Activated CD4-positive, alpha-beta T cell treated with anti-CD3 and anti-CD28 coated beads for 36 hours (primary cell): ENCODE measurements at regions of chr11 and their contacts with region 1.

Region 1: GRCh38 chr11:67265633-67266423 is 445 bp upstream of the GRK2 start:
- DNase-seq: peak; percentile 87
- ATAC-seq: peak; percentile 18
- H3K4me3 Mint-ChIP-seq: peak overlapping the region; percentile 72
- H3K27ac Mint-ChIP-seq: peak overlapping the region; percentile 90
- H3K4me1 Mint-ChIP-seq: peaks cover 78% of the 10 kb centered on the region
- H3K27me3 Mint-ChIP-seq: no peaks in the 10 kb centered on the region

Region 2: DNA sequence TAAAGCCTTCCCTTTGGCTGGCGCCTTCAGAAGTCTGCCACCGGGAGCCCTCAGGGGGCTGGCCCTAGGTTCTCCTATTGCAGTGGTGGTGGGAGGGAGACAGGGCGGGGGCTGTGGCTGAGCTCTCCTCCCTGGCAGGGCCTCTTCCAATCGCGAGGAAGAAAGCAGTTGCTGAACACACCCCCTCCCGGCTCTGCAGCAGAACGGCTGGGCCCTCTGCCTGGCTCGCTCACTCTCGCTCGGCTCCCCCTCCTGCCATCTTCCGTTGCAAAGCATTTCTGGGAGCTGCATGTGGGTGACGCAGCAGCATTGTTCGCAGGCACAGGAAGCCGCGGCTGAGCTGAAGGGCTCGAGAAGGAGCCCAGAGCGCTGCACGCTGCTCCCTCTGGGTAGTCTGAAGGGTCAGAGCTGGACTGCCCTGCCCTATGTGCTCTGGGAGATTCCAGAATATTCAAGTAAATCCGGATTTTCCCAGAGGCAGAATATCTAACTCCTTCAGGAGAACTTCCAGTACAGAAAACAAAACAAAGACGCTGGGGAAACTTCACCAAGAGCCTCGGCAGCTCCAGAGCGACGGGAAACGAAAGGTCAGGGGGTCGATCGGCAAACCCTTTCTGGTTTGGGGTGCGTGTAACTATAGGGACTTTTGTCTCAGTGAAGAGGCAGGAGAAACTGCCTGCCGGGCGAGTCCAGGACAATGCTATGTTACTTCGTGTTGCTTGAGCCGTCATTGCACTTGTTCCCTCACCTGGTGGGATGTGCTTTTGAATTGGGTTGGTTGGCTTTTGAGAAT is 25.8 kb before region 1 on chr11:
- CTCF ChIA-PET with region 1: interaction called, 9 read pairs
- POLR2A ChIA-PET with region 1: interaction called, 8 read pairs
- intact Hi-C with region 1: loop called (anchors 1 to 2 kb)
- DNase-seq: peak; percentile 98
- ATAC-seq: peak; percentile 94
- H3K4me3 Mint-ChIP-seq: peak overlapping the region; percentile 98
- H3K27ac Mint-ChIP-seq: peak overlapping the region; percentile 99
- H3K4me1 Mint-ChIP-seq: peaks cover 43% of the 10 kb centered on the region
- H3K27me3 Mint-ChIP-seq: no peaks in the 10 kb centered on the region

Region 3: GRCh38 chr11:67252831-67253239 is 13.0 kb before region 1 on chr11:
- CTCF ChIA-PET with region 1: interaction called, 38 read pairs
- POLR2A ChIA-PET with region 1: no interaction called
- intact Hi-C with region 1: no loop called
- DNase-seq: peak; percentile 55
- ATAC-seq: peak; percentile 75
- H3K4me3 Mint-ChIP-seq: no peak overlapping the region
- H3K27ac Mint-ChIP-seq: peak overlapping the region; percentile 47
- H3K4me1 Mint-ChIP-seq: peaks cover 16% of the 10 kb centered on the region
- H3K27me3 Mint-ChIP-seq: no peaks in the 10 kb centered on the region

Region 4: DNA sequence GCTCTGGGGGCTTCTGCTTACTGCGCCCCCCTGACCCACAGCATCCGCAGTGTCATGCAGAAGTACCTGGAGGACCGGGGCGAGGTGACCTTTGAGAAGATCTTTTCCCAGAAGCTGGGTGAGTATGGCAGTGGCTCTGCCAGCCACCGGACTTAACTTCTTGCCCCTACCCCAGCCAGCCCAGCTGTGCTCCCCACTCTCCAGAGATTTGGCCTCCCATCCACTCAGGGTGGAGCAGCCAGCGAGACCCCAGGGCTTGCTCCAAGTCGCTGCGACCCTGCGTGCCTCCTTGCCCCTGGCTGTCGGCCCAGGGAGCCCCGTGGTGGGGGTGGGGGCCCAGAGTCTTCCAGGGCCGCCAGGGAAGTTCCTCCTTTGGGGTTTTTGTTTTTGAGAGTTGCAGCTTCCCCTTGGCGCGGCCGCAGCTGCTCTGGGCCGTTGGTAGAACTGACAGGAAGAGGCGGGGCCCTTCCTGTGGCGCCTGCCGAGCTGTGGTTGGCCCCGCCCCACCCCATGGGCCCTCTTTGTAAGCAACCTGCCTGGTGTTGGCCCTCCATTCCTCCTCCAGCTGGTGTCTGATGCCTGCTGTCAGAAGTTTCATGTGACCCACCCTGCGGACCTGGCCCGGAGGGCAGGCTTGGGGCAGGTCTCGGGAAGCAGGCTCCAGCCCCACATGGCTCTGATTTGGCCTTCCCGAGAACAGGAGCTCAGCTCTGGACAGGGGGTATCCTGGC is 11.6 kb after region 1 on chr11:
- CTCF ChIA-PET with region 1: interaction called, 15 read pairs
- POLR2A ChIA-PET with region 1: interaction called, 6 read pairs
- intact Hi-C with region 1: loop called (anchors 1 kb)
- DNase-seq: peak; percentile 95
- ATAC-seq: peak; percentile 88
- H3K4me3 Mint-ChIP-seq: peak overlapping the region; percentile 76
- H3K27ac Mint-ChIP-seq: peak overlapping the region; percentile 99
- H3K4me1 Mint-ChIP-seq: peaks cover 68% of the 10 kb centered on the region
- H3K27me3 Mint-ChIP-seq: no peaks in the 10 kb centered on the region

Region 5: GRCh38 chr11:67345920-67346799 is 80.3 kb after region 1 on chr11:
- CTCF ChIA-PET with region 1: interaction called, 12 read pairs
- POLR2A ChIA-PET with region 1: no interaction called
- intact Hi-C with region 1: no loop called
- DNase-seq: peak; percentile 45
- ATAC-seq: peak; percentile 77
- H3K4me3 Mint-ChIP-seq: no peak overlapping the region
- H3K27ac Mint-ChIP-seq: peak overlapping the region; percentile 89
- H3K4me1 Mint-ChIP-seq: peaks cover 55% of the 10 kb centered on the region
- H3K27me3 Mint-ChIP-seq: no peaks in the 10 kb centered on the region

Region 6: GRCh38 chr11:67382276-67383136 is 116.7 kb after region 1 on chr11:
- CTCF ChIA-PET with region 1: interaction called, 15 read pairs
- POLR2A ChIA-PET with region 1: no interaction called
- intact Hi-C with region 1: loop called (anchors 1 to 5 kb)
- DNase-seq: peak; percentile 90
- ATAC-seq: peak; percentile 97
- H3K4me3 Mint-ChIP-seq: no peak overlapping the region
- H3K27ac Mint-ChIP-seq: no peak overlapping the region
- H3K4me1 Mint-ChIP-seq: peaks cover 2% of the 10 kb centered on the region
- H3K27me3 Mint-ChIP-seq: no peaks in the 10 kb centered on the region

Region 7: GRCh38 chr11:67482825-67483798 is 217.3 kb after region 1 on chr11 and contains the start of gene AIP:
- CTCF ChIA-PET with region 1: no interaction called
- POLR2A ChIA-PET with region 1: no interaction called
- intact Hi-C with region 1: loop called (anchors 5 kb)
- DNase-seq: peak; percentile 99
- ATAC-seq: peak; percentile 72
- H3K4me3 Mint-ChIP-seq: peak within 1 kb of the TSS; percentile 86
- H3K27ac Mint-ChIP-seq: peak within 1 kb of the TSS; percentile 99
- H3K4me1 Mint-ChIP-seq: peaks cover 50% of the 10 kb centered on the region
- H3K27me3 Mint-ChIP-seq: no peaks in the 10 kb centered on the region
- total RNA-seq, gene AIP: 142 to 144 TPM

Region 8: GRCh38 chr11:67498544-67498972 is 232.7 kb after region 1 on chr11:
- CTCF ChIA-PET with region 1: no interaction called
- POLR2A ChIA-PET with region 1: no interaction called
- intact Hi-C with region 1: no loop called
- DNase-seq: no peak
- ATAC-seq: no peak
- H3K4me3 Mint-ChIP-seq: no peak overlapping the region
- H3K27ac Mint-ChIP-seq: no peak overlapping the region
- H3K4me1 Mint-ChIP-seq: peaks cover 22% of the 10 kb centered on the region
- H3K27me3 Mint-ChIP-seq: no peaks in the 10 kb centered on the region